ENCODE measurements at regions of chr16 and their contacts with region 1.

Region 1: GRCh38 chr16:71412270-71413160 is 29.3 kb downstream of the TLE7 start:
- DNase-seq: peak; percentile 86
- H3K4me3 Mint-ChIP-seq: peak overlapping the region; percentile 31
- H3K27ac Mint-ChIP-seq: no peak overlapping the region
- H3K4me1 Mint-ChIP-seq: no peaks in the 10 kb centered on the region
- H3K27me3 Mint-ChIP-seq: peaks cover 67% of the 10 kb centered on the region
- CTCF ChIP-seq: peak; percentile 68

Region 2: DNA sequence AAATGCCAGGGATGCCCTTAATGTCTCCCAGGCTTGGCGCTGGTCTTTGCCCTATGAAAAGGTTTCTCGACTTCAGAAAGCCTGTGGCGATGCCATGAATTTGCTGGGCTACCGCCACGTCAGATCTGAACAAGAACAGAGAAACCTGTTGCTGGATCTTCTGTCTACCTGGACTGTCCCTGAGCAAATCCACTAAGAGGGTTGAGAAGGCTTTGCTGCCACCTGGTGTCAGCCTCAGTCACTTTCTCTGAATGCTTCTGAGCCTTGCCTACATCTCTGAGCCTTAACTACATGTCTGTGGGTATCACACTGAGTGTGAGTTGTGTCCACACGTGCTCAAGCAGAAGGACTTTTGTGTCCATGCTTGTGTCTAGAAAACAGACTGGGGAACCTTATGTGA is 125.1 kb after region 1 on chr16:
- CTCF ChIA-PET with region 1: interaction called, 5 read pairs
- intact Hi-C with region 1: loop called (anchors 1 kb)
- DNase-seq: peak; percentile 78
- H3K4me3 Mint-ChIP-seq: no peak overlapping the region
- H3K27ac Mint-ChIP-seq: no peak overlapping the region
- H3K4me1 Mint-ChIP-seq: peaks cover 22% of the 10 kb centered on the region
- H3K27me3 Mint-ChIP-seq: no peaks in the 10 kb centered on the region
- CTCF ChIP-seq: peak; percentile 72